ENCODE measurements at regions of chr3 and their contacts with region 1.

Region 1: DNA sequence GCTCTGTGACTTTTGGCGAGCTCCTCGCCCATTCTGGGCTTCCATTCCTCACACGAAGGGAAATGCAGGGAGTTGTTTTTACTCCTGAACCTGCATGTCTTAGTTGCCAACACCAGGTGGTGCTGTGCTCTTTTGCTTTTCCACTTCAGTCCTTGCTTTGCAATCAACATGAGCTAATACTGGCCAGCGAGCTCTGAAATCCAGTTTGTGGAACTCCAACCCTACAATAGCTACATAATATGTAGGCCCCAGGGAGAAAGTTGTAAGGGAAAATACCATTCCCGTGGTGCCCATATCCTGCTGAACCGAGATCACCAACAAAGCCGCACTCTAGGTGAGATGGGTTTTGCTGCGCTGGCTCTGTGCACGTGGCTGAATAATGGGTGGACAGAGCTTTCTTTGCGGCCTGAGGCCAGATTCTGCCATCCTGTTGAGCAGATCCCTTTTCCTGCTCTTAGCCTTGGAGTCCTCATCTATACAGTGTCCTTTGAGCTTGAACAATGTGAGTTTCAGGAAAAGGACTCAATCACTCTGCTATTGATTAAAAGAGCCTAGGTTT is 25.0 kb downstream of the LSM3 start:
- DNase-seq: peak; percentile 60
- ATAC-seq: peak; percentile 81
- H3K4me3 Mint-ChIP-seq: no peak overlapping the region
- H3K27ac Mint-ChIP-seq: peak overlapping the region; percentile 74; the same call in 1 of the 2 replicates
- H3K4me1 Mint-ChIP-seq: peaks cover 5% of the 10 kb centered on the region; the same call in 1 of the 2 replicates
- H3K27me3 Mint-ChIP-seq: no peaks in the 10 kb centered on the region
- CTCF ChIP-seq: peak; percentile 71; the same call in 1 of the 2 replicates

Region 2: DNA sequence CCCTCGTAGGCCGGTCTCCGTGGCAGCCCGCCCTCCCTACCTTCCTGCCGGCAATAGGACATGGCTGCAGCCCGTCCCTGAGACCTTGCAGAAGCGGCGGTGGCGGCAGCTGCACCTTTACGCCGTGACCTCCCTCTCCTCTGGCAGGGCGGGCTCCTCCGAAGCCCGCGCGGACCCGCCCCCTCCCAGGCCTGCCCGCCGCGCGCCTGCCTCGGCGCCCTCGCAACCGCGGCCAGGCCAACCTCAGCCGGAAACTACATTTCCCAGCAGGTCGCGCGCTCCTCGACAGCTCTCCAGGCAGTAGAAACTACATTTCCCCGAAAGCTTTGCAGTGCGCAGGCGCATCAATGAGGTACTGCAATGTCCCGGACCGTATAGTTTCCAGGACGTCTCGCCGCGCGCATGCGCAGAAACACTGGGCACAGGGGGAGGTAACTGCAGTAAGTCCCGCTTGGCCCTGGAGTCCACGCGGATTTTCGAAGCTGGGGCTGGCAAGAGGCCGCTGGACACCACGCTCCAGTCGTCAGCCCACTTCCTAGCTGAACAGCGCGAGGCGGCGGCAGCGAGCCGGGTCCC is 78.9 kb before region 1 on chr3 and contains the starts of genes CHCHD4 and TMEM43:
- CTCF ChIA-PET with region 1: interaction called, 16 read pairs
- POLR2A ChIA-PET with region 1: no interaction called
- DNase-seq: peak; percentile 99
- ATAC-seq: peak; percentile 79
- H3K4me3 Mint-ChIP-seq: peak within 1 kb of the TSS; percentile 100
- H3K27ac Mint-ChIP-seq: peak within 1 kb of the TSS; percentile 96
- H3K4me1 Mint-ChIP-seq: peaks cover 40% of the 10 kb centered on the region
- H3K27me3 Mint-ChIP-seq: no peaks in the 10 kb centered on the region
- CTCF ChIP-seq: no peak
- total RNA-seq, gene CHCHD4: 20.9 to 27.5 TPM (median 21.4 TPM) in 3 replicates
- total RNA-seq, gene TMEM43: 23.9 to 27.7 TPM (median 24.1 TPM) in 3 replicates

Region 3: GRCh38 chr3:14216257-14217048 is 12.9 kb after region 1 on chr3:
- CTCF ChIA-PET with region 1: interaction called, 56 read pairs
- POLR2A ChIA-PET with region 1: no interaction called
- DNase-seq: peak; percentile 82
- ATAC-seq: peak; percentile 99
- H3K4me3 Mint-ChIP-seq: peak overlapping the region; percentile 76
- H3K27ac Mint-ChIP-seq: peak overlapping the region; percentile 93
- H3K4me1 Mint-ChIP-seq: peaks cover 9% of the 10 kb centered on the region
- H3K27me3 Mint-ChIP-seq: peaks cover 4% of the 10 kb centered on the region; the same call in 1 of the 2 replicates
- CTCF ChIP-seq: peak; percentile 26; the same call in 1 of the 2 replicates

Region 4: DNA sequence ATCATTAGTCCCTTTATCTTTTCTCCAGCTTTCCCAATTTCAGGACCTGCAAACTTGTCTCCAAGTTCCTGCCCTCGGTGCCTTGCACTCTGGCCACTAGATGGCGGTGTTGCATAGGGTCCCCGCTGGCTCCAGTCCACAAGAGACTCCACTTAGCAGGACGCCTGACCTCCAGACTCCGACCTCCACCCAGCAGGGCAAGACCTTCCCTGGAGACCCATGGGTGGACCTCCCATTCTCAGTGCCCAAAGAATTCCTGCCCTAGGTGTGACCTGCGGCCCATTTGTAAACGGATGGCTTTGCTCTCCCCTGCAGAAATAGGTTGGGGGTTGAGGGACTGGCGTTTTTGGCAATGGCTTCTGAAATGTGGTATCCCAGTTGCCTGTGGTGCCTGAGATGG is 57.6 kb after region 1 on chr3:
- CTCF ChIA-PET with region 1: interaction called, 24 read pairs
- POLR2A ChIA-PET with region 1: no interaction called
- DNase-seq: peak; percentile 92
- ATAC-seq: peak; percentile 85
- H3K4me3 Mint-ChIP-seq: no peak overlapping the region
- H3K27ac Mint-ChIP-seq: no peak overlapping the region
- H3K4me1 Mint-ChIP-seq: peaks cover 17% of the 10 kb centered on the region
- H3K27me3 Mint-ChIP-seq: peaks cover 5% of the 10 kb centered on the region
- CTCF ChIP-seq: peak; percentile 99

Region 5: DNA sequence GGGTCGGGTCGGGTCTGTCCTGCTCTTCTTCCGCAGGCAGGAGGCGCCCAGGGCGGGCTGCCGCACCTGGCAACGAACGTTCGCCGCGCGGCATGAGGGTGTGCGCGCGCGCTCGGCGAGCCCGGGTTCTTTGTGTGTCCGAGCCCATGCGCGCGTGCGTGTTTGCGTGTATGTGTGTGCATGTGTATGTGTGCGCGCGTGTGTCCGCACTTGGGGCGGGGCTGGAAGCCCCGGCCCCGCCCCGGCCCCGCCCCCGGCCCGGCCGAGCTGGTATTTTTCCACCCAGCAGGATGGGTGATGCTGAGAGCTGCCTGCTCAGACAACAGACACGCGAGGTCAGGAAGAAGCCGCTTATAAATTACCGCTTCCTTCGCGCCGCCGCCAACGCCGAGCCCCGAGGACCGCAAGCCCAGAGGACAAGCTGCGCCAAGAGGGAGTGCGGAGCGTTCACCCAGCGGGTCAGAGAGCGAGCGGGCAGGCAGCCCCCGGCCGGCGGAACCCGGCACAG is 198.8 kb after region 1 on chr3 and contains the start of gene SLC6A6:
- CTCF ChIA-PET with region 1: interaction called, 12 read pairs
- POLR2A ChIA-PET with region 1: no interaction called
- DNase-seq: peak; percentile 94
- ATAC-seq: peak; percentile 88
- H3K4me3 Mint-ChIP-seq: peak within 1 kb of the TSS; percentile 97
- H3K27ac Mint-ChIP-seq: peak within 1 kb of the TSS; percentile 98
- H3K4me1 Mint-ChIP-seq: peaks cover 54% of the 10 kb centered on the region
- H3K27me3 Mint-ChIP-seq: peaks cover 3% of the 10 kb centered on the region; the same call in 1 of the 2 replicates
- CTCF ChIP-seq: no peak
- total RNA-seq, gene SLC6A6: 144 to 211 TPM (median 147 TPM) in 3 replicates

Region 6: DNA sequence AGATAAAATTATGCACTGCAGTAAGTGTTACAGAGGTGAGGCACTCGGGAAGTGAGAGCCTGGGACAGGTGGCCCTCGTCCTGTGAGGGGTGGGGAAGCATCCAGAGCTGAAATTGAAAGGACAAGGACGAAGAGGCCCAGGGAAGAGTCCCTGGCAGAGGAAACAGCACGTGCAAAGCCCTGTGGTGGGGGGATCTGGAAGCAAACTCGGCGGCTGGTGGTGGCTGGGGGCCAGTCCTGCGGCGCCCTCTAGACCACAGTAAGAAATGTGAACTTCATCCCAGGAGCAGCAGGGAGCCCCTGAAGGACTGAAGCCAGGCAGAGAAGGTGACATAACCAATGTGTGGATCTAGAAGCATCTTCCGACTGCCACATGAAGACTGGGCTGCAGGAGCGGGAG is 293.7 kb after region 1 on chr3:
- CTCF ChIA-PET with region 1: interaction called, 39 read pairs
- POLR2A ChIA-PET with region 1: no interaction called
- DNase-seq: peak; percentile 49
- ATAC-seq: peak; percentile 86
- H3K4me3 Mint-ChIP-seq: no peak overlapping the region
- H3K27ac Mint-ChIP-seq: no peak overlapping the region
- H3K4me1 Mint-ChIP-seq: peaks cover 3% of the 10 kb centered on the region
- H3K27me3 Mint-ChIP-seq: peaks cover 4% of the 10 kb centered on the region
- CTCF ChIP-seq: no peak